Activated B cell treated with CpG ODN at 0.5 μM for 24 hours (primary cell): ENCODE measurements at regions of chr10 and their contacts with region 1.

Region 1: DNA sequence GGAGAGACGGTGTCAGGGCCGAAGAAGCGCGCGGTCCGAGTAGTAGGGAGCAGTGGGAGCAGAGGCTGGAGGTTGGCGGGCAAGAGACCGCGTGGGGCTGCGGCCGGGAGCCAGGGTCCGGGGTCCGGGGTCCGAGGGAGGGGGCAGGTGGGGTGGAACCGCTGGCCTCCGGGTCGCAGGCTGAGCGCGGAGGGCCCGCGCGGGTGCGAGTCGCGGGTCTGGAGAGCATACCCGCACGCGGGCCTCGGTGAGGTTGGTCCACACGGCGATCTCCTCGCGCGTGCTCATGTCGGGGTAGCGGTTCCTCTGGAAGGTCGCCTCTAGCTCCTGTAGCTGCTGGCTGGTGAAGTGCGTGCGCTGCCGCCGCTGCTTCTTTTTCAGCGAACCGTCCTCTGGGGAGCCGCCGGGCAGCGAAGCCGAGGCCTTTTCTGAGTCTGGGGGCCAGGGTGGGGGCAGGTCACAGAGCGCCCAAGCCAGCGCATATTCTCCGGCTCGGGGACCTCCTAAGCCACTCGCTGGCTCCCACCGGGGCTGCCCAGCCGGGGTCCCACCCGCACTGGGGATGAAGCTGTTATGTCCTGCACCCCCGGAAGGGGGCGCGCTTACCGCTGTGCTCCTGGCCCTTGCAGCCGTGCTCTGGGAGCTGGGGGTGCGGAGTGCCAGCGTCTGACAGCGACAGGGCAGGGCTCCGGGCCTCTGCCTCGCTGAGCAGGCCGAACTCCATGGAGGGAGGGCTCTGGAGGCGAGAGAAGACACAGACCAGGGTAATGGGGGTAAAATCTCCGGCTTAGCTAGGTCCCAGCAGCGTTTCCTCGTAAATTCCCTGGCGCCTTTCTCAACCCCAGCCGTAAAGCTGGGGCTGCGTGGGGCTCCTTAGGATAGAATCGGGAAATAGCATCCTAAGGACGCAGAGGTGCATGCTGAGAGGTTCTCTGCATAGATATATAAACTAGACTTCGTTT is 5.5 kb downstream of the ELOVL3 start:
- DNase-seq: peak; percentile 68
- ATAC-seq: peak; percentile 65
- H3K4me3 Mint-ChIP-seq: peak overlapping the region; percentile 82
- H3K27ac Mint-ChIP-seq: no peak overlapping the region
- H3K4me1 Mint-ChIP-seq: peaks cover 14% of the 10 kb centered on the region
- H3K27me3 Mint-ChIP-seq: peaks cover 57% of the 10 kb centered on the region
- CTCF ChIP-seq: no peak

Region 2: DNA sequence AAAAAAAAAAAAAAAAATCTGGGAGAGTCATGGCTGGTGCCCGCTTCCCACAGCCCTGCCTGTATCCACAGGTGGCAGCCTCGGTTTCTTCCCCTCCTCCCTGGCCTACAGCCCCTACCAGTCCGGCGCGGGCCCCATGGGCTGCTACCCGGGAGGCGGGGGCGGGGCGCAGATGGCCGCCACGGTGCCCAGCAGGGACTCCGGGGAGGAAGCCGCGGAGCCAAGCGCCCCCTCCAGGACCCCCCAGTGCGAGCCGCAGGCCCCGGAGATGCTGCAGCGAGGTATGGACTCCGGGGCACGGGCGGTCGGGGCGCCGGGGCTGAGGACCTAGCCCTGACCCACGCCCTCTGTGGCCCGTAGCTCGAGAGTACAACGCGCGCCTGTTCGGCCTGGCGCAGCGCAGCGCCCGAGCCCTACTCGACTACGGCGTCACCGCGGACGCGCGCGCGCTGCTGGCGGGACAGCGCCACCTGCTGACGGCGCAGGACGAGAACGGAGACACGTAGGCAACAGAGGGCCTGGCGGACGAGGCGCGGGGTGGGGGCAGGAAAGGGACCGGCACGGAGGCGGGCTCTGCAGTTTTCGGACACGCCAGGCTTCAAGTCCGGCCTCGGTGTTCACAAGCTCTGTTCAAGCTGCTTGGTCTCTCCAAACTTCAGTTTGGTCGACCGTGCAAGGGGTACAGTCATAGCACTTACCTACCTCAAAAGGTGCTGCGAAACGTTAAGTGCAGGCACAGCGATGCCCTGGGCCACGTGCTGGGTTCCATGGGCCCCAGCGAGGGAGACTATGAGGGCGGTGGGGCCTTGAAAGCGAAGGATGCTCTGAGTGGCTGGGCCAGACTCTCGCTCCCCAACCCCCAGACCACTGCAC is 167.8 kb after region 1 on chr10:
- CTCF ChIA-PET with region 1: interaction called, 12 read pairs
- POLR2A ChIA-PET with region 1: interaction called, 33 read pairs
- intact Hi-C with region 1: loop called (anchors 1 kb)
- DNase-seq: peak; percentile 87
- ATAC-seq: peak; percentile 37
- H3K4me3 Mint-ChIP-seq: peak overlapping the region; percentile 94
- H3K27ac Mint-ChIP-seq: peak overlapping the region; percentile 97
- H3K4me1 Mint-ChIP-seq: peaks cover 54% of the 10 kb centered on the region
- H3K27me3 Mint-ChIP-seq: no peaks in the 10 kb centered on the region
- CTCF ChIP-seq: peak; percentile 95